Activated CD4-positive, alpha-beta memory T cell treated with anti-CD3 and anti-CD28 coated beads for 36 hours (primary cell): ENCODE measurements at regions of chr6 and their contacts with region 1.

Region 1: DNA sequence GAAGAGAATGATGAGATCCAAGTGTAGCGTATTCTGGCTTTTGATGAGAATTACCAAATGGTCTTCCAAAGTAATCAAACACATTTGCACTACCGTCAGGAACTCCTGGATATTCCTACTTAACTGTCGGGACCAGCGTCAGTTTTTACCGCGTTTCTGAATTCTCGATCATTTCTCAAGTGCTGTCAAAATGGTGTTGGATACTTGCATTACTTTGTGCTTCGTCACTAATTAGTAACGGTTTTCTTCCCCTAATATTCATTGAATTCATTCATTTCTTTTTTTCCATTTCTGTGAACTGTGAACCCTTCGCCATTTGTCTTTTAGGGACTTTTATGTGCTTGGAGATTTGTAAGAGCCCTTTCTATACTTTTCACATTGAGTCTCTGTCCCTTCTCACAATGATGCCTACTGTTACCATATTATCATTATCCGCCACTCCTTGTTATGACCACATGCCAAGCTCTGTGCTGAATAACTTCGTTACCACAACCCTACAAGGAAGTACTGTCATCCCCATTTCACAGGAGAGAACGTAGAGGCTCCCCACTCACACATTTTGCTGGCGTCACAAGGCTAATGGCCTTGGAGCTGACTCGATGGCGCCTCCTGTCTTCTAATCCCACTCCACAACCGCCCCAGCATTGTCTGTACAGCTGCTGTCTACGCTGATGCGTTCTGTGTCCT is 74.2 kb upstream of the QKI start:
- DNase-seq: no peak
- H3K4me3 Mint-ChIP-seq: no peak overlapping the region
- H3K27ac Mint-ChIP-seq: no peak overlapping the region
- H3K4me1 Mint-ChIP-seq: no peaks in the 10 kb centered on the region
- H3K27me3 Mint-ChIP-seq: peaks cover 7% of the 10 kb centered on the region

Region 2: GRCh38 chr6:163324411-163325389 is 15.6 kb before region 1 on chr6:
- CTCF ChIA-PET with region 1: no interaction called
- POLR2A ChIA-PET with region 1: no interaction called
- intact Hi-C with region 1: loop called (anchors 2 kb)
- DNase-seq: no peak
- H3K4me3 Mint-ChIP-seq: no peak overlapping the region
- H3K27ac Mint-ChIP-seq: no peak overlapping the region
- H3K4me1 Mint-ChIP-seq: no peaks in the 10 kb centered on the region
- H3K27me3 Mint-ChIP-seq: peaks cover 5% of the 10 kb centered on the region